SK-N-SH (cell line): ENCODE measurements at regions of chr11 and their contacts with region 1.

Region 1: GRCh38 chr11:36289226-36289852 is at the start of gene COMMD9:
- DNase-seq: peak; percentile 92
- H3K4me3 ChIP-seq: peak within 1 kb of the TSS; percentile 66 to 89
- H3K27ac ChIP-seq: peak within 1 kb of the TSS in 1 of 2 experiments; percentile 32; a peak in 1 of 4 replicates
- H3K4me1 ChIP-seq: peaks cover 3 to 13% of the 10 kb centered on the region in 2 experiments; a peak in 3 of 4 replicates
- H3K27me3 ChIP-seq: no peaks in the 10 kb centered on the region
- CTCF ChIP-seq: no peak
- EP300 ChIP-seq: no peak
- RAD21 ChIP-seq: no peak
- polyA plus RNA-seq, gene COMMD9: 44.2 and 48.2 TPM in 2 replicates

Region 2: DNA sequence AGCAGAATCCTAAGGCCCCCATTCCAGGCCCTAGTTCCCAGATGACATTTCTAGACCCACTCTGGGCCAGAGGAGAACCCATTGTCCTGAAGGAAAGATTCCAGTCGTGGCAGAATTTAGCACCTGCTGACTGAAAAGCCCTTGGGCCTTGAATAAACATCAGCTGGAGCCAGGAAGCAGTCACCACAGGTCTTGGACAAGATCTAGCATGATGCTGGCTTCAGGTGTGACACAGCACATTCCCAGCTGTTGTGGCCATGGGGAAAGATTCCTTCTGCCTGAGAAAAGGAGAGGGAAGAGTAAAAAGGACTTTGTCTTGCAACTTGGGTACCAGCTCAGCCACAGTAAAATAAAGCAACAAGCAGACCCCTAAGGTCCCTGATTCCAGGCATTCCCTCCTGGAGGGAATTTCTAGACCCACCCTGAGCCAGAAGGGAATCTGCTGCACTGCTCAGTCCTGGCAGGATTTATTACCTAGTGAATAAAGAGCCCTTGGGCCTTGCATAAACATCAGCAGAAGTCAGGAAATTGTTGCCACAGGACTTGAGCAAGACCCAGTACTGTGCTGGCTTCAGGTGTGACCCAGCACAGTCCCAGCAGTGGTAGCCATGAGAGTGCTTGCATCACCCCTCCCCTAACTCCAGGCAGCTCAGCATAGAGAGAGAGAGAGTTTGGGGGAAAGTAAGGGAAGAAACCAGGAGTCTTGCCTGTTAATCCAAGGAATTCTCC is 721.4 kb before region 1 on chr11:
- CTCF ChIA-PET with region 1: no interaction called
- POLR2A ChIA-PET with region 1: no interaction called
- DNase-seq: no peak
- H3K4me3 ChIP-seq: no peak overlapping the region
- H3K27ac ChIP-seq: no peak overlapping the region
- H3K4me1 ChIP-seq: peaks cover 0 to 14% of the 10 kb centered on the region in 2 experiments; a peak in 2 of 4 replicates
- H3K27me3 ChIP-seq: no peaks in the 10 kb centered on the region
- CTCF ChIP-seq: no peak
- EP300 ChIP-seq: no peak
- RAD21 ChIP-seq: no peak

Region 3: GRCh38 chr11:36492724-36493304 is 203.5 kb after region 1 on chr11:
- CTCF ChIA-PET with region 1: interaction called, 44 read pairs
- POLR2A ChIA-PET with region 1: no interaction called
- DNase-seq: peak; percentile 46
- H3K4me3 ChIP-seq: no peak overlapping the region
- H3K27ac ChIP-seq: no peak overlapping the region
- H3K4me1 ChIP-seq: peaks cover 5 to 11% of the 10 kb centered on the region in 2 experiments; a peak in 3 of 4 replicates
- H3K27me3 ChIP-seq: no peaks in the 10 kb centered on the region
- CTCF ChIP-seq: peak; percentile 89
- EP300 ChIP-seq: no peak
- RAD21 ChIP-seq: peak; percentile 80